Dendritic cell treated with granulocyte-macrophage colony-stimulating factor and Interleukin-4, amounts not matched to agents 40 ng/mL and 50 ng/mL, for 4 days (primary cell): ENCODE measurements at regions of chr1 and their contacts with region 1.

Region 1: GRCh38 chr1:159214149-159214760 is 9.6 kb downstream of the ACKR1 start:
- H3K4me3 Mint-ChIP-seq: no peak overlapping the region
- H3K27ac Mint-ChIP-seq: no peak overlapping the region
- H3K4me1 Mint-ChIP-seq: peaks cover 21% of the 10 kb centered on the region
- H3K27me3 Mint-ChIP-seq: peaks cover 22% of the 10 kb centered on the region

Region 2: DNA sequence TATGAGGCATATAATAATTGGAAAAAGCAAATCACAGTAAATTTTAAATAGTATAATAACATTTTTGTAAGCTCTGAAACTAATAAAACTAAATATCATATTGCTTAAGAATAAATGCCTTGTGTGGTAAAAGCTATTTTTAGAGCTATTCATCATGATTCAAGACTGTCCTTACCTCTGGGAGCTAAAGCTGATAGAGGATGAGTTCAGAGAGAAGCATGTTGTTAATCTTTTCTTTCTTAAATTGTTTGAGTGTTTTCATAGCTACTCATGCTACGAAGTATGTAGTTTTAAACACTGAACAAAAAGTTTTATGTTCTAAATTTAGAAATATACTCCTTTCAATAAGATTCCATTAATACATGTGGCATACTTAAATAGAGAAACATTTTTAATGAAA is 174.0 kb before region 1 on chr1:
- intact Hi-C with region 1: no loop called
- H3K4me3 Mint-ChIP-seq: no peak overlapping the region
- H3K27ac Mint-ChIP-seq: no peak overlapping the region
- H3K4me1 Mint-ChIP-seq: peaks cover 5% of the 10 kb centered on the region
- H3K27me3 Mint-ChIP-seq: no peaks in the 10 kb centered on the region

Region 3: GRCh38 chr1:159132271-159132881 is 81.9 kb before region 1 on chr1:
- intact Hi-C with region 1: loop called (anchors 1 kb)
- H3K4me3 Mint-ChIP-seq: no peak overlapping the region
- H3K27ac Mint-ChIP-seq: no peak overlapping the region
- H3K4me1 Mint-ChIP-seq: no peaks in the 10 kb centered on the region
- H3K27me3 Mint-ChIP-seq: no peaks in the 10 kb centered on the region

Region 4: DNA sequence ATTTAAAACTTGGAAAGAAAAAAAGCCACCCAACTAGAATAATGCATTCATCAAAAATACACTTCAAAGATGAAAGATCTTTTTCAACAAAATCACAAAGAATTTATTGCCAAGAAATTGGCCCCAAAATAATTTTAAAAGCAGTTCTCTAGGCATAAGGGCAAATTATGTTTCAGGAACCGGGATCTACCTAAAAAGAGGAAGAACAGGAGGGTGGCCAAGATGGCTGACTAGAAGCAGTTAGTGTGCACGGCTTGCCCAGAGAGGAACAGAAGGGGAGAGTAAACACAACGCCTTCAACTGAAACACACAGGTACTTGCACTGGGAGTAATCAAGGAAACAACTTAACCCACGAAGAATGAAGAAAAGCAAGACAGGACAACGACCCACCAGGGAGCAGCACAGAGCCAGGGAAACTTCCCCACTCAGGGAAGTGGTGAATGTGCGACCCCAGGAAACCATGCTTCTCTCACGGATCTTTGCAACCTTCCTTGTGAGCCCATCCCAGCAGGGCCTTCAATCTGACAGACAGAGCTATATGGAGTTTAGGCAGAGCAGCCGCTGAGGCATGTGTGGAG is 36.5 kb after region 1 on chr1:
- intact Hi-C with region 1: no loop called
- H3K4me3 Mint-ChIP-seq: no peak overlapping the region
- H3K27ac Mint-ChIP-seq: peak overlapping the region; percentile 54
- H3K4me1 Mint-ChIP-seq: peaks cover 13% of the 10 kb centered on the region
- H3K27me3 Mint-ChIP-seq: no peaks in the 10 kb centered on the region

Region 5: DNA sequence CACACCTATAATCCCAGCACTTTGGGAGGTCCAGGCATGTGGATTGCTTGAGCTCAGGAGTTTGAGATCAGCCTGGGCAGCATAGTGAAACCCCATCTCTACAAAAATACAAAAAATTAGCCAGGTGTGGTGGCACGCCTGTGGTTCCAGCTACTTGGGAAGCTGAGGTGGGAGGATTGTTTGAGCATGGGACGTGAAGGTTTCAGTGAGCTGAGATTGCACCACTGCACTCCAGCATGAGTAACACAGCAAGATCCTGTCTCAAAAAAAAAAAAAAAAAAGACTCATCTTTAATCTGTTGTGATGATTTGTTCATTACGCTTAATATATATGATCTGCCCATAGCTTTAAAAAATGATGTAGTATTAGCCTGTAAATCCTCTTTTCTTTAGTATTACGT is 269.2 kb after region 1 on chr1:
- intact Hi-C with region 1: no loop called
- H3K4me3 Mint-ChIP-seq: no peak overlapping the region
- H3K27ac Mint-ChIP-seq: no peak overlapping the region
- H3K4me1 Mint-ChIP-seq: peaks cover 6% of the 10 kb centered on the region
- H3K27me3 Mint-ChIP-seq: no peaks in the 10 kb centered on the region

Region 6: GRCh38 chr1:159790237-159790917 is 576.1 kb after region 1 on chr1:
- intact Hi-C with region 1: loop called (anchors 5 kb)
- H3K4me3 Mint-ChIP-seq: no peak overlapping the region
- H3K27ac Mint-ChIP-seq: no peak overlapping the region
- H3K4me1 Mint-ChIP-seq: no peaks in the 10 kb centered on the region
- H3K27me3 Mint-ChIP-seq: peaks cover 14% of the 10 kb centered on the region